Panc1 (cell line): ENCODE measurements at regions of chr6 and their contacts with region 1.

Region 1: GRCh38 chr6:137944793-137945498 is 77.9 kb downstream of the TNFAIP3 start:
- DNase-seq: peak; percentile 13
- ATAC-seq: peak; percentile 86
- H3K4me3 ChIP-seq: no peak overlapping the region
- H3K27ac ChIP-seq: no peak overlapping the region
- H3K4me1 ChIP-seq: no peaks in the 10 kb centered on the region
- H3K27me3 ChIP-seq: no peaks in the 10 kb centered on the region; the same call in none of the 2 replicates
- CTCF ChIP-seq: peak; percentile 80

Region 2: DNA sequence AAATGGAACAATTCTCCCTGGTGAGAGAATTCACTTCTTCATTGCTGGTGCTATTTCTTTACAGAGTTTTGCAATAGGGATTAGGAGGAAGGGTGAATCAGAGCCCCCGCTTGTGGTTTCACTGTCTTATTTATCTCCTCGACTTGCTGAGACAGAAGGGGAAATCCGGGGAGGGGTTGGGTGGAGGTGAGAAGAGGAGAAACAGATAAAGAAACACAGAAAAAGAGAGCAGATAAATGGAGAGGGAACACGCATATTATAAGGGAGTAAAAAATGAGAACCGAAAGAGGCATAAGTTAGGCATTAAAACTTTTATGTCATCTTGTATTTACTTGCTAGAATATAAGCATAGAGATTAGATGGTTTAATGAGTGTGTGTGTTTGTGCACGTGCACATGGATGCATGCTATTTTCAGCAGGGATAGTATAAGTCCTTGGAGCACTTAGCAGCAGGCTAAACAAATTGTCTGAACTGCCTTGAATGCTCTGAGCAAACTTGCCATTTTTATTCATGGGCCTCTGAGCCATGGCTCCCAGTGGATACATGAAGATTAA is 555.7 kb before region 1 on chr6:
- CTCF ChIA-PET with region 1: no interaction called
- POLR2A ChIA-PET with region 1: no interaction called
- in situ Hi-C with region 1: no loop called
- intact Hi-C with region 1: no loop called
- DNase-seq: no peak
- ATAC-seq: no peak
- H3K4me3 ChIP-seq: no peak overlapping the region
- H3K27ac ChIP-seq: no peak overlapping the region
- H3K4me1 ChIP-seq: no peaks in the 10 kb centered on the region
- H3K27me3 ChIP-seq: 0 out of 2 replicates have a peak, but pooled peaks cover 8% of the 10 kb centered on the region
- CTCF ChIP-seq: no peak

Region 3: DNA sequence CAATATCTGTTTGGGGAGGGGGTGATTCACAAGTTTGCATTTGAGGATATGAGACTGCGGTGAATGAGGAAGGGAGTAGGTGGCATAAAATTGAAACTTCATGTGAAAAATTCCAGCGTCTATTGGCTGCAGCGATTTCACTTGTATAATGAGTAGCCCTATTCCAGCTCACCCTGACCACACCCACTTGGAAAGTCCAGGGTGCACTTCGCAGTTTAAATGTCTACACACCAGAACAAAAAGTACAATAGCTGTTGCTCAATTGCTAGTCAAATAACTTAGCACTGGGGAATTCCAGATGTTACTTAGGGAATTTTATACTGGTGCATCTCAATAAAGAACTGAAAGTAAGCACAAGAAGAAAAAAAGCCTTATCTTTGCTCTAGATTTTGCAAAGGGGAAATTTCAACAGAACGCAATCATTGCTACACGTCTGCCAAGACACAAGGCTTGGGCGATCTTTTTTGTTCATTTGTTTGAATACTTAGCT is 71.6 kb before region 1 on chr6:
- CTCF ChIA-PET with region 1: no interaction called
- POLR2A ChIA-PET with region 1: no interaction called
- in situ Hi-C with region 1: no loop called
- intact Hi-C with region 1: loop called (anchors 5 kb)
- DNase-seq: no peak
- ATAC-seq: peak; percentile 83
- H3K4me3 ChIP-seq: no peak overlapping the region
- H3K27ac ChIP-seq: no peak overlapping the region; the same call in 1 of the 2 replicates
- H3K4me1 ChIP-seq: peaks cover 30% of the 10 kb centered on the region
- H3K27me3 ChIP-seq: no peaks in the 10 kb centered on the region
- CTCF ChIP-seq: no peak

Region 4: DNA sequence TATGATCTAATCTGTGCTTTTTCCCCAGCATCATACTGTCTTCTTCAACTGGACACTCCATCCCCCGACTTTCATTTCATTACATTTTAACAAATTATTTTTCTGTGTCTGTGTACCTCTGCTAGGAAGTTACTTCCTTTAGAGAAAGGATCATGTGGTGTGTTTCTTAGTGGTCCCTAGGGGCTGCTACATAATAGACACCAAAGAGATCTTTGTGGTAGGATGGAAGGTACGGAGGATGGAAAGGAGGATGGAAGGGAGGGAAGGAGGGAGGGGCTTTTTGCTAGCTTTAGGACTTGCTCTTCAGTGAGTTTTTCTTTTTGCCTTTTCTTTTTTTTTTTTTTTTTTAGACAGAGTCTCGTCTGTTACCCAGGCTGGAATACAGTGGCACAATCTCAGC is 17.8 kb after region 1 on chr6:
- CTCF ChIA-PET with region 1: interaction called, 11 read pairs
- POLR2A ChIA-PET with region 1: no interaction called
- in situ Hi-C with region 1: no loop called
- intact Hi-C with region 1: no loop called
- DNase-seq: no peak
- ATAC-seq: no peak
- H3K4me3 ChIP-seq: no peak overlapping the region
- H3K27ac ChIP-seq: no peak overlapping the region
- H3K4me1 ChIP-seq: no peaks in the 10 kb centered on the region
- H3K27me3 ChIP-seq: no peaks in the 10 kb centered on the region
- CTCF ChIP-seq: no peak